ENCODE measurements at regions of chr2 and their contacts with region 1.

Region 1: GRCh38 chr2:241508240-241509154 is at the start of gene STK25:
- DNase-seq: peak; percentile 99
- ATAC-seq: peak; percentile 96
- H3K4me3 Mint-ChIP-seq: peak within 1 kb of the TSS; percentile 79
- H3K27ac Mint-ChIP-seq: peak within 1 kb of the TSS; percentile 58
- H3K4me1 Mint-ChIP-seq: peaks cover 19% of the 10 kb centered on the region
- H3K27me3 Mint-ChIP-seq: peaks cover 3% of the 10 kb centered on the region
- total RNA-seq, gene STK25: 93.5 to 123 TPM

Region 2: GRCh38 chr2:240586198-240586918 is 922.1 kb before region 1 on chr2 and contains the start of gene CAPN10:
- CTCF ChIA-PET with region 1: no interaction called
- POLR2A ChIA-PET with region 1: no interaction called
- intact Hi-C with region 1: loop called in 1 of 2 experiments (anchors 1 kb)
- DNase-seq: peak; percentile 98
- ATAC-seq: peak; percentile 91
- H3K4me3 Mint-ChIP-seq: peak within 1 kb of the TSS; percentile 87
- H3K27ac Mint-ChIP-seq: peak within 1 kb of the TSS; percentile 85
- H3K4me1 Mint-ChIP-seq: peaks cover 38% of the 10 kb centered on the region
- H3K27me3 Mint-ChIP-seq: no peaks in the 10 kb centered on the region
- total RNA-seq, gene CAPN10: 22.1 to 30.2 TPM

Region 3: GRCh38 chr2:241217320-241218031 is 291.0 kb before region 1 on chr2:
- CTCF ChIA-PET with region 1: no interaction called
- POLR2A ChIA-PET with region 1: no interaction called
- intact Hi-C with region 1: loop called in 1 of 2 experiments (anchors 1 kb)
- DNase-seq: peak; percentile 60
- ATAC-seq: peak; percentile 37
- H3K4me3 Mint-ChIP-seq: peak overlapping the region; percentile 56
- H3K27ac Mint-ChIP-seq: no peak overlapping the region
- H3K4me1 Mint-ChIP-seq: peaks cover 9% of the 10 kb centered on the region
- H3K27me3 Mint-ChIP-seq: peaks cover 2% of the 10 kb centered on the region

Region 4: GRCh38 chr2:241390301-241391206 is 117.9 kb before region 1 on chr2:
- CTCF ChIA-PET with region 1: no interaction called
- POLR2A ChIA-PET with region 1: no interaction called
- intact Hi-C with region 1: no loop called
- DNase-seq: peak; percentile 38
- ATAC-seq: peak; percentile 23
- H3K4me3 Mint-ChIP-seq: no peak overlapping the region
- H3K27ac Mint-ChIP-seq: no peak overlapping the region
- H3K4me1 Mint-ChIP-seq: peaks cover 14% of the 10 kb centered on the region
- H3K27me3 Mint-ChIP-seq: no peaks in the 10 kb centered on the region

Region 5: GRCh38 chr2:241540771-241541561 is 32.5 kb after region 1 on chr2:
- CTCF ChIA-PET with region 1: no interaction called
- POLR2A ChIA-PET with region 1: no interaction called
- intact Hi-C with region 1: loop called (anchors 1 kb)
- DNase-seq: peak; percentile 90
- ATAC-seq: peak; percentile 92
- H3K4me3 Mint-ChIP-seq: peak overlapping the region; percentile 31
- H3K27ac Mint-ChIP-seq: no peak overlapping the region
- H3K4me1 Mint-ChIP-seq: peaks cover 4% of the 10 kb centered on the region
- H3K27me3 Mint-ChIP-seq: peaks cover 14% of the 10 kb centered on the region

Region 6: GRCh38 chr2:241637000-241637791 is 128.7 kb after region 1 on chr2 and contains the starts of genes ATG4B and THAP4:
- CTCF ChIA-PET with region 1: interaction called, 5 read pairs
- POLR2A ChIA-PET with region 1: no interaction called
- intact Hi-C with region 1: loop called in 1 of 2 experiments (anchors 1 kb)
- DNase-seq: peak; percentile 90
- ATAC-seq: peak; percentile 69
- H3K4me3 Mint-ChIP-seq: peak within 1 kb of the TSS; percentile 84
- H3K27ac Mint-ChIP-seq: peak within 1 kb of the TSS; percentile 96
- H3K4me1 Mint-ChIP-seq: peaks cover 50% of the 10 kb centered on the region
- H3K27me3 Mint-ChIP-seq: no peaks in the 10 kb centered on the region
- total RNA-seq, gene ATG4B: 71.8 to 80.1 TPM
- total RNA-seq, gene THAP4: 42.5 to 54.1 TPM

Region 7: DNA sequence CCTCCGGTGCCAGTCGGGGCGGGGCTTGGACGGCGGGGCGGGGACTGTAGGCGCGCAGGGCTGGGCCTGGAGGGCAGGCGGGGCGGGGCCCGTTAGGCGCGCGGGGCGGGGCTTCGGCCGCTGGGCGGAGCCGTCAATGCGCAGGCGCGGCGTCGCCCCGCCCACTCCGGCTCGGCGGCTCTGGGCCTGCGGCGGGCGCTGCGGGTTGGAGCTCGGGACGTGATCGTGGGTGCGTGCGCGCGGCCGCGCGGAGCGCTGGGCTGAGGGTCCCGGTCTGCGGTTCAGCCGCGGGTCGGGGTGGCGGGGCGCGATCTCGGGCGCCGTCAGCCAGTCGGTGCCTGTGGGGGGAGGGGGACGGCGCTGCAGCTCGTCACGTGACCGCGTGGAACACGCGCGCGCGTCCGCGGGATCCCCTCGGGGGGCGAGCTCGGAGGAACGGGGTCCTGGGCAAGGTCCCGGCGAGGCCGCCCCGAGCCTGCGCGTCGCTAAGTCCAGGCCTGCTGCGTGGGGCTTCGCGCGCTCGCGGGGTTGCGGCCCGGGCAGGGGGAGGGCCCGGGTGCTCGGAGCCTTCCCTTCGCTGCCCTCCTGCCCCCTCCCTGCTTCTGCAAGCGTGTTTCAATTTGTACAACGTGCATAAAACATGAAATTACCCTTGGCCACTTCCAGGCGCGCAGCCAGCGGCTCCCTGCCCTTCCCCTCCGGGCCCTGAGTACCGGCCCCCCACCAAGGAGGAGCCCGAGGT is 226.1 kb after region 1 on chr2 and contains the start of gene D2HGDH:
- CTCF ChIA-PET with region 1: no interaction called
- POLR2A ChIA-PET with region 1: no interaction called
- intact Hi-C with region 1: loop called in 1 of 2 experiments (anchors 1 kb)
- DNase-seq: peak; percentile 98
- ATAC-seq: peak; percentile 92
- H3K4me3 Mint-ChIP-seq: peak within 1 kb of the TSS; percentile 79
- H3K27ac Mint-ChIP-seq: peak within 1 kb of the TSS; percentile 70
- H3K4me1 Mint-ChIP-seq: peaks cover 57% of the 10 kb centered on the region
- H3K27me3 Mint-ChIP-seq: no peaks in the 10 kb centered on the region
- total RNA-seq, gene D2HGDH: 18.2 to 34.1 TPM